A673 (cell line): ENCODE measurements at regions of chr1 and their contacts with region 1.

Region 1: GRCh38 chr1:191508239-191508638 is 650.0 kb upstream of the RGS18 start:
- DNase-seq: peak; percentile 47
- H3K4me3 ChIP-seq: no peak overlapping the region
- H3K27ac ChIP-seq: no peak overlapping the region
- H3K4me1 ChIP-seq: peaks cover 7% of the 10 kb centered on the region
- H3K27me3 ChIP-seq: no peaks in the 10 kb centered on the region
- CTCF ChIP-seq: no peak

Region 2: GRCh38 chr1:191519279-191519918 is 11.2 kb after region 1 on chr1:
- CTCF ChIA-PET with region 1: no interaction called
- POLR2A ChIA-PET with region 1: no interaction called
- intact Hi-C with region 1: loop called (anchors 1 kb)
- DNase-seq: no peak
- H3K4me3 ChIP-seq: no peak overlapping the region
- H3K27ac ChIP-seq: no peak overlapping the region
- H3K4me1 ChIP-seq: no peaks in the 10 kb centered on the region
- H3K27me3 ChIP-seq: no peaks in the 10 kb centered on the region
- CTCF ChIP-seq: no peak